ENCODE measurements at regions of chr7 and their contacts with region 1.

Region 1: GRCh38 chr7:27921081-27921836 is 181.3 kb downstream of the TAX1BP1 start:
- DNase-seq: peak; percentile 90
- ATAC-seq: peak; percentile 87
- H3K4me3 ChIP-seq: peak overlapping the region; percentile 57
- H3K27ac ChIP-seq: peak overlapping the region; percentile 66
- H3K4me1 ChIP-seq: peaks cover 45% of the 10 kb centered on the region
- H3K27me3 ChIP-seq: no peaks in the 10 kb centered on the region
- CTCF ChIP-seq: peak; percentile 82

Region 2: DNA sequence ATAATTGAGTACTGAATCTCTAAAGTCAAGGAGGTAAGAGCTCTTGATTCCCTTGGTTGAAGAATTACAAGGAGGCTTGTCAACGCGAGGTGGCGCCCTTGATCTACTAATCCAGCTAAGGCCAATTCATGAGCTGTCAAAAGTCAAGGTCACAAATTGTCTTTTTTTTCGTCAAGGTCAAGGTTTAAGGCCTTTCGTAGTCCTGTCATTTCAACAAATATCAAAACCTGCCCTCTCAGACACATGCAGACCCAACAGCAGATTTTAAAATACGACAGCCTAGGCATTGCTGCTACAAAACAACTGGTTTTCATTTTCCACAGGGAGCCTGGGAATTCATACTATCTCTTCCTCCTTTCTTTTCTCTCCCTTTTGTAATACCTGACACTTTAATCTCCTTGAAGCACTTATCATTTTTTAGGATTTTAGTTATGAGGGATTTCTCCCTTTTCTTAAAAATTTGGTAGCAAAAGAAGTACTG is 724.9 kb before region 1 on chr7:
- CTCF ChIA-PET with region 1: interaction called, 17 read pairs
- POLR2A ChIA-PET with region 1: no interaction called
- intact Hi-C with region 1: loop called (anchors 1 kb)
- DNase-seq: peak; percentile 89
- ATAC-seq: no peak
- H3K4me3 ChIP-seq: peak overlapping the region; percentile 91
- H3K27ac ChIP-seq: peak overlapping the region; percentile 21; the same call in 1 of the 2 replicates
- H3K4me1 ChIP-seq: peaks cover 14% of the 10 kb centered on the region
- H3K27me3 ChIP-seq: no peaks in the 10 kb centered on the region
- CTCF ChIP-seq: peak; percentile 91

Region 3: GRCh38 chr7:27532314-27532713 is 388.9 kb before region 1 on chr7:
- CTCF ChIA-PET with region 1: no interaction called
- POLR2A ChIA-PET with region 1: no interaction called
- intact Hi-C with region 1: no loop called
- DNase-seq: no peak
- ATAC-seq: no peak
- H3K4me3 ChIP-seq: no peak overlapping the region
- H3K27ac ChIP-seq: no peak overlapping the region
- H3K4me1 ChIP-seq: peaks cover 13% of the 10 kb centered on the region
- H3K27me3 ChIP-seq: no peaks in the 10 kb centered on the region
- CTCF ChIP-seq: no peak

Region 4: DNA sequence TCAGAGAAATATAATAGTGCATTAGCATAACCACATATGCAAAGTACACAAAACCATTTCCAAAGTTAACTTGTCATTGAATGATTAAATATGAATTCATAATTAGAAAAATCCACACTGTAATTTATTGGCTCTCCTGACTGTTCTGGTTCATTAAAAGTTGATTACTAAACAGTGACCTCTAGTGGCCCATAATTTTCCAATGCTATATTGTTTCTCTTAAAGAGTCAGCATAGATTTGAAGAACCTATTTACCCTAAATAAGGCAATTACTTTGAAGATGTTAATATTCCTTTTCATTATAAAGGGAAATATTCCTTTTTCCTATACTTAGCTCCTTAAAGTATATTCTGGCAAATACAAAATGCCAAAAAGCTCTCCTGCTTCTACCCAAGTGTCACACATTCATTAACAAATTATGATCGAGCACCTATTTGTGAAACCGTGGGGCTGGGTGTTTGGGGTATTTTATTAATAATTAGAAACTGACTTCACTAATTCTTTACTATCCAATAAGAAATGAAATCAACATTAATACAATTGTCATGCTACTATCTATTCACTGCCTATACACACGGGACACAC is 344.8 kb before region 1 on chr7:
- CTCF ChIA-PET with region 1: no interaction called
- POLR2A ChIA-PET with region 1: interaction called, 3 read pairs
- intact Hi-C with region 1: loop called (anchors 2 kb)
- DNase-seq: peak; percentile 79
- ATAC-seq: peak; percentile 56
- H3K4me3 ChIP-seq: no peak overlapping the region
- H3K27ac ChIP-seq: no peak overlapping the region
- H3K4me1 ChIP-seq: peaks cover 11% of the 10 kb centered on the region
- H3K27me3 ChIP-seq: no peaks in the 10 kb centered on the region
- CTCF ChIP-seq: peak; percentile 80

Region 5: GRCh38 chr7:27662490-27663205 is 258.6 kb before region 1 on chr7 and contains the start of gene HIBADH:
- CTCF ChIA-PET with region 1: no interaction called
- POLR2A ChIA-PET with region 1: no interaction called
- intact Hi-C with region 1: loop called (anchors 1 kb)
- DNase-seq: peak; percentile 99
- ATAC-seq: peak; percentile 98
- H3K4me3 ChIP-seq: peak within 1 kb of the TSS; percentile 81
- H3K27ac ChIP-seq: peak within 1 kb of the TSS; percentile 60
- H3K4me1 ChIP-seq: 0 out of 2 replicates have a peak, but pooled peaks cover 7% of the 10 kb centered on the region
- H3K27me3 ChIP-seq: no peaks in the 10 kb centered on the region
- CTCF ChIP-seq: no peak
- total RNA-seq, gene HIBADH: 43.7 and 45.8 TPM in 2 replicates

Region 6: GRCh38 chr7:27745064-27745583 is 176.1 kb before region 1 on chr7:
- CTCF ChIA-PET with region 1: interaction called, 22 read pairs
- POLR2A ChIA-PET with region 1: interaction called, 4 read pairs
- intact Hi-C with region 1: loop called (anchors 2 kb)
- DNase-seq: peak; percentile 79
- ATAC-seq: peak; percentile 45
- H3K4me3 ChIP-seq: peak overlapping the region; percentile 41
- H3K27ac ChIP-seq: peak overlapping the region; percentile 32
- H3K4me1 ChIP-seq: peaks cover 35% of the 10 kb centered on the region
- H3K27me3 ChIP-seq: no peaks in the 10 kb centered on the region
- CTCF ChIP-seq: peak; percentile 80

Region 7: DNA sequence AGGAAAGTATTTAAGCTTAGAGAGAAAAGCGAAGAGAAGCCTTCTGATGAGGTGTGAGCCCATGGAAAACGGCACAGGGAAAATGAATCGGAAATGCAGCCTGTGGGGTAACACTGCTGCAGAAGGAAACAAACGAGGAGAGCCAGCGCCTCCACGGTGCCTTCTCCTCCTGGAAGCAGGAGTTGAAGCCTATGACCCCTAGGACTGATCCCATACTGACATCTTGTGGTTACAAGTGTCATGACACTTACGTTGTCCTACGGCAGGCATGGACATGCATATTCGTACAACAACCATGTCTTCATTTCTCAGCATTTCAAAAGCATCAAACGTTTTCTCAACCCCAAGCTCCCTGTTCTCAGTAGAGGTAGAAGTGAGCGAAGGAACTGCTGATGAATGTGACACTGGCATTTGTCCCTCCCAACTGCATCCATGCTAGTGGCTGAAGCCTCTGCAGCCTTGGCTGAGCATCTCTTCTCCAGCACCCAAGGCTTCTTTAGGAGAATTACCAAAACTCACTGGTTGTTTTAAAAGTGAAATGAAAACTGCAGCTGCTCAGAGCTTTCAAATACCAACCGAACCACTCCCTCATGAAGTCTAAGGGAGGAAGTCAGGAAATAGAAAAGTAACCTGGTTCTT is 99.2 kb after region 1 on chr7:
- CTCF ChIA-PET with region 1: no interaction called
- POLR2A ChIA-PET with region 1: no interaction called
- intact Hi-C with region 1: loop called (anchors 1 kb)
- DNase-seq: peak; percentile 82
- ATAC-seq: peak; percentile 93
- H3K4me3 ChIP-seq: no peak overlapping the region; the same call in 1 of the 2 replicates
- H3K27ac ChIP-seq: no peak overlapping the region
- H3K4me1 ChIP-seq: peaks cover 11% of the 10 kb centered on the region
- H3K27me3 ChIP-seq: no peaks in the 10 kb centered on the region
- CTCF ChIP-seq: peak; percentile 89

Region 8: GRCh38 chr7:28096713-28097112 is 175.5 kb after region 1 on chr7:
- CTCF ChIA-PET with region 1: interaction called, 13 read pairs
- POLR2A ChIA-PET with region 1: no interaction called
- intact Hi-C with region 1: loop called (anchors 5 kb)
- DNase-seq: peak; percentile 71
- ATAC-seq: peak; percentile 66
- H3K4me3 ChIP-seq: no peak overlapping the region
- H3K27ac ChIP-seq: no peak overlapping the region
- H3K4me1 ChIP-seq: no peaks in the 10 kb centered on the region
- H3K27me3 ChIP-seq: no peaks in the 10 kb centered on the region
- CTCF ChIP-seq: peak; percentile 88